Naive thymus-derived CD4-positive, alpha-beta T cell (primary cell): ENCODE measurements at regions of chr3 and their contacts with region 1.

Region 1: DNA sequence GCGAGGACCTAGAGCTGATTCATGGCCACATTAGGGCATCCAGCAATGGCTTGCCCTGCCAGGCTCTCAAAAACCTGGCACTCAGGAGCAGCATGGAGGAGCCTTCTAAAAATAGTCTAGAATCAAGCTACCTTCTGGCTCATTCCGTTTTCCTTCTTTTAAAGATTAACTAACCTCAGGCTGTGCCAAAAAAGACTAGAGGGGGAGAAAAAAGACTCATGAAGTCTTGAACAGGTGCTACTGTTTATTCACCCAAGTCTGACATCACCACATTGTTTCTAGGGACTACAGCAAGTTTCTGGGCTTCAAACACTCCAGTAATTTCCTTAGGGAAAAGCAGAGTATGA is 125.8 kb downstream of the TNIK start:
- DNase-seq: no peak
- ATAC-seq: no peak
- H3K4me3 ChIP-seq: no peak overlapping the region
- H3K4me3 Mint-ChIP-seq: no peak overlapping the region
- H3K27ac ChIP-seq: no peak overlapping the region
- H3K27ac Mint-ChIP-seq: peak overlapping the region in 6 of 9 donors; percentile 9 to 87 (median 51)
- H3K4me1 ChIP-seq: peaks cover 5 to 8% of the 10 kb centered on the region in 2 donors
- H3K4me1 Mint-ChIP-seq: peaks cover 19 to 92% (median 82%) of the 10 kb centered on the region in 7 donors
- H3K27me3 ChIP-seq: no peaks in the 10 kb centered on the region
- H3K27me3 Mint-ChIP-seq: no peaks in the 10 kb centered on the region

Region 2: GRCh38 chr3:171173736-171174135 is 160.7 kb before region 1 on chr3:
- CTCF ChIA-PET with region 1: no interaction called
- POLR2A ChIA-PET with region 1: no interaction called
- intact Hi-C with region 1: no loop called
- DNase-seq: no peak
- ATAC-seq: peak; percentile 71
- H3K4me3 ChIP-seq: no peak overlapping the region
- H3K4me3 Mint-ChIP-seq: no peak overlapping the region
- H3K27ac ChIP-seq: no peak overlapping the region
- H3K27ac Mint-ChIP-seq: peak overlapping the region in 3 of 9 donors; percentile 26 to 63 (median 43)
- H3K4me1 ChIP-seq: no peaks in the 10 kb centered on the region
- H3K4me1 Mint-ChIP-seq: peaks cover 6 to 17% (median 8%) of the 10 kb centered on the region in 7 donors
- H3K27me3 ChIP-seq: no peaks in the 10 kb centered on the region
- H3K27me3 Mint-ChIP-seq: no peaks in the 10 kb centered on the region

Region 3: DNA sequence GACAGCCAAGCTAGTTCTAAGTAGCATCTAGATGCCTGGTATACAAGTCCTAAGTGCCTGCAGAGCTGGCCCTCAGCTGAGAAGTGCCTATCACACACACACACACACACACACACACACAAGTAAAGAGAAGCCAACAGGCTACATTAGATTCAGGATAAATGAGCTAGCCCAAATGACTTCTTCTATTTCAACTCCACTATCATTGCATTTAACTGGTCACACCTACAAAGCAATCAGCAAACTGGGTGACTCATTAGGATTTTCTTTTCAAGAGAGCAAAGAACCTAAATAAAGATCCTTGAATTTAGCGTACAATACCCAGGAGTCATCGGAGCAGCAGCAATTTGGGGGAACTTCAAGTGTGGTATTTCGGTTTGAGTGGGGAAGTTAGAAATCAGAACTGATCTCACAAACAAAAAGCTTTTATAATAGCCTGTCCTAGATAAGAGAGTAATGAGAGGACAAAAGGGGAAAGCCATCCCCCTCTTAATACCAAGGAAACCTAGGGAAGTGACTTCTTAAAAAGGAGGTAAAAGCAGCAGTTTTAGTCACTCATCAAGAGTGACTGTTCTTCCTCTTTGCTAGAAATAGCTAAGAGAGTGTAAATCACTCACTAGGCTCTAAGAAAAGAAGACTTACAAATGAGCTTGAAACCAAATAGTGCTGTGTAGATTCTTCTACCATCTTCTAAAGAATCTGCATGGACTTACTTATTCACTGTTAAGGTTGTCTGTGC is 13.0 kb after region 1 on chr3:
- CTCF ChIA-PET with region 1: interaction called, 3 read pairs
- POLR2A ChIA-PET with region 1: no interaction called
- intact Hi-C with region 1: loop called in 1 of 2 experiments (anchors 2 kb)
- DNase-seq: no peak
- ATAC-seq: peak; percentile 64
- H3K4me3 ChIP-seq: no peak overlapping the region
- H3K4me3 Mint-ChIP-seq: no peak overlapping the region
- H3K27ac ChIP-seq: no peak overlapping the region
- H3K27ac Mint-ChIP-seq: peak overlapping the region in 3 of 9 donors; percentile 33 to 53 (median 44)
- H3K4me1 ChIP-seq: peaks cover 0 to 5% of the 10 kb centered on the region in 2 donors
- H3K4me1 Mint-ChIP-seq: peaks cover 21 to 89% (median 75%) of the 10 kb centered on the region in 7 donors
- H3K27me3 ChIP-seq: no peaks in the 10 kb centered on the region
- H3K27me3 Mint-ChIP-seq: no peaks in the 10 kb centered on the region

Region 4: GRCh38 chr3:172501560-172501959 is 1167.1 kb after region 1 on chr3:
- CTCF ChIA-PET with region 1: no interaction called
- POLR2A ChIA-PET with region 1: no interaction called
- intact Hi-C with region 1: no loop called
- DNase-seq: no peak
- ATAC-seq: no peak
- H3K4me3 ChIP-seq: no peak overlapping the region
- H3K4me3 Mint-ChIP-seq: no peak overlapping the region
- H3K27ac ChIP-seq: no peak overlapping the region
- H3K27ac Mint-ChIP-seq: no peak overlapping the region
- H3K4me1 ChIP-seq: no peaks in the 10 kb centered on the region
- H3K4me1 Mint-ChIP-seq: peaks cover 0 to 32% (median 10%) of the 10 kb centered on the region in 7 donors
- H3K27me3 ChIP-seq: no peaks in the 10 kb centered on the region
- H3K27me3 Mint-ChIP-seq: peaks cover 0 to 3% (median 0%) of the 10 kb centered on the region in 5 donors

Region 5: GRCh38 chr3:172673210-172673679 is 1338.8 kb after region 1 on chr3:
- CTCF ChIA-PET with region 1: no interaction called
- POLR2A ChIA-PET with region 1: no interaction called
- intact Hi-C with region 1: no loop called
- DNase-seq: peak; percentile 10 to 61 (median 27)
- ATAC-seq: peak; percentile 70
- H3K4me3 ChIP-seq: no peak overlapping the region
- H3K4me3 Mint-ChIP-seq: no peak overlapping the region
- H3K27ac ChIP-seq: no peak overlapping the region
- H3K27ac Mint-ChIP-seq: no peak overlapping the region
- H3K4me1 ChIP-seq: no peaks in the 10 kb centered on the region
- H3K4me1 Mint-ChIP-seq: peaks cover 0 to 21% (median 2%) of the 10 kb centered on the region in 7 donors
- H3K27me3 ChIP-seq: no peaks in the 10 kb centered on the region
- H3K27me3 Mint-ChIP-seq: no peaks in the 10 kb centered on the region

Region 6: GRCh38 chr3:172929451-172929850 is 1595.0 kb after region 1 on chr3:
- CTCF ChIA-PET with region 1: no interaction called
- POLR2A ChIA-PET with region 1: no interaction called
- intact Hi-C with region 1: no loop called
- DNase-seq: no peak
- ATAC-seq: no peak
- H3K4me3 ChIP-seq: no peak overlapping the region
- H3K4me3 Mint-ChIP-seq: no peak overlapping the region
- H3K27ac ChIP-seq: no peak overlapping the region
- H3K27ac Mint-ChIP-seq: no peak overlapping the region
- H3K4me1 ChIP-seq: no peaks in the 10 kb centered on the region
- H3K4me1 Mint-ChIP-seq: no peaks in the 10 kb centered on the region
- H3K27me3 ChIP-seq: no peaks in the 10 kb centered on the region
- H3K27me3 Mint-ChIP-seq: peaks cover 0 to 7% (median 5%) of the 10 kb centered on the region in 5 donors